Common myeloid progenitor, CD34-positive (primary cell): ENCODE measurements at regions of chr7 and their contacts with region 1.

Region 1: DNA sequence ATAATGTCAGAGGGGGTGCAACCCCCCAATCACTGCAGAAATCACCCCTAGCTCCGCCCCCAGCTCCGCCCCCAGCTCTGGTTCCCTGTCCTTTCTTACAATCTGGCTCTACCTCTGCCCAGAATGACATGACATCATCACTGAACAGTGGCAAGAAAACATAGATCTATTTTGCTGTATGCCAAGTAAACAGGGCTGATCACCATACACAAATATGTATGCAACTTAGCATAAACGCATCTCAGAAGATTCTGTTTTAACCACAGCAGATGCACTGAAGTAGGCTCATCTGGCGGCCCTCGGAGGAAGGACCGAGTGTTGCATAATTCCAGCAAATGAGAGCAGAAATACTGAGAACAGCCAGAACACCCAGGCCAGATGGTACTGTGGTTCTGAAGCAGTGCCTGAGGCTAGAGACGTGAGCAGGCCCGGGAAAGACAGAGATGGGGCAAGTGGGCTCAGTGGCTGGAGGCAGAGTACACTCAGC is 293.3 kb upstream of the KLF14 start:
- DNase-seq: peak in 2 of 3 donors; percentile 86 to 87
- H3K4me3 ChIP-seq: no peak overlapping the region
- H3K27ac ChIP-seq: peak overlapping the region; percentile 27 to 50
- H3K4me1 ChIP-seq: peaks cover 5 to 51% (median 25%) of the 10 kb centered on the region in 4 experiments
- H3K27me3 ChIP-seq: no peaks in the 10 kb centered on the region

Region 2: DNA sequence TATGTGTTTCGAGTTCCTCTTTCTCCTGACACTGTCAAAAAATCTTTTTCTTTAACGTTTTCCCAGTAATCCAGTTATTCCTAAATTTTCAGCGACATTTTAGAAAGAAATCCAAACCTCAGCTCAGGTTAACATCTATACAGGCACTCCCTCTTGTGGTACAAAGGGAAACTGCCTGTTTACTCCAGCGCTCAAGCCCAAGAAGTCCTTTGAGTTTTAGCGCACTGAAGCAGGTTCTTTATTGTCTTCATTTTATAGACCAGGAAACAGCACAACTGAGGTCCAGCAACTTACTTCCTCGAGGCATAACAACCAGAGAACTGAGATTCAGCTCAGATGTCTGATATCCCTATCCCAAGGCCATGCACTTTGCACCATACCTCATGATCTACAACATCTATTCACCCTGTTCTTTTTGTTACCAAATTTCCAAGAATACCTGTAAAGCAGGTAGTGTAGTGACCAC is 13.2 kb after region 1 on chr7:
- CTCF ChIA-PET with region 1: interaction called, 12 read pairs
- POLR2A ChIA-PET with region 1: no interaction called
- DNase-seq: peak; percentile 64 to 84 (median 78)
- H3K4me3 ChIP-seq: peak overlapping the region in 2 of 7 experiments; percentile 25 to 68
- H3K27ac ChIP-seq: no peak overlapping the region
- H3K4me1 ChIP-seq: peaks cover 4 to 27% (median 14%) of the 10 kb centered on the region in 4 experiments
- H3K27me3 ChIP-seq: no peaks in the 10 kb centered on the region

Region 3: DNA sequence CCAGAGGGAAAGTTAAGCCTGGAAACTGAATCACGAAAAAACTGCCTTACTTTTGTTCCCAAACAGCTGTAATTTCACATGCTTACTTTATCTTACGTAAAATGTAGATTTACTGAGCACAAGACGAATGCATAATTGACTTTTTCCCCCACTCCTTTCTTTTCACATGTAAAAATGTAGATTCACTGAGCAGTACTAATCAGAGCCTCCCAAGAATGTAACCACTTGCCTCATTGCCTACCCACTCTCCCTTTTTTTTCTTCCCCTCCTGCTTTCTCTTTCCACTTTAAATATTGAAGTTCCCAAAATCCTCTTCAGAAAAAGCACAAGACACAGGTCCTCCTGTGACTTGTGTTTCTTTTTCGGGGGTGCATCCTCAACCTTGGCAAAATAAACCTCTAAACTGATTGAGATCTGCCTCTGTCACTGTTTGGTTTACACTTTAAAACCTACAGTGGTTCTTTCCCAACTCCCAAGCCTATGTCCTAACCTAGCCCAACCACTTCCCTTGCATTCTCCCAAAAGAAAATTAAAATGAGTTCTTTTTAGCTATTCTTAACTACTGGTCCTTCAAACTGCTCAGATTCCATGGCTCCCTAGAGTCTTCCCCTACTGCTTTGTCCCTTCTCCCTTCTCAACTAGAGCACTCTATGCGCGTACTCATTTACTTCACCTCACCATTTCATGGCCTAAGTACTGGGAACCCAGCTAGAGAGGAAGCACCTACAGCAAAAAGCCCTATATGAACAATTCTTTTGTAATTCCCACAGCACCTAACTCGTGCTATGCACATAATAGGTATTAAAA is 63.8 kb after region 1 on chr7:
- CTCF ChIA-PET with region 1: no interaction called
- POLR2A ChIA-PET with region 1: no interaction called
- DNase-seq: no peak
- H3K4me3 ChIP-seq: no peak overlapping the region
- H3K27ac ChIP-seq: no peak overlapping the region
- H3K4me1 ChIP-seq: peaks cover 0 to 7% (median 0%) of the 10 kb centered on the region in 4 experiments
- H3K27me3 ChIP-seq: no peaks in the 10 kb centered on the region

Region 4: GRCh38 chr7:131164025-131164899 is 136.9 kb after region 1 on chr7:
- CTCF ChIA-PET with region 1: no interaction called
- POLR2A ChIA-PET with region 1: no interaction called
- DNase-seq: no peak
- H3K4me3 ChIP-seq: no peak overlapping the region
- H3K27ac ChIP-seq: no peak overlapping the region
- H3K4me1 ChIP-seq: no peaks in the 10 kb centered on the region
- H3K27me3 ChIP-seq: no peaks in the 10 kb centered on the region